Heart right ventricle (tissue), 16 donors: ENCODE measurements at regions of chr17 and their contacts with region 1.

Region 1: DNA sequence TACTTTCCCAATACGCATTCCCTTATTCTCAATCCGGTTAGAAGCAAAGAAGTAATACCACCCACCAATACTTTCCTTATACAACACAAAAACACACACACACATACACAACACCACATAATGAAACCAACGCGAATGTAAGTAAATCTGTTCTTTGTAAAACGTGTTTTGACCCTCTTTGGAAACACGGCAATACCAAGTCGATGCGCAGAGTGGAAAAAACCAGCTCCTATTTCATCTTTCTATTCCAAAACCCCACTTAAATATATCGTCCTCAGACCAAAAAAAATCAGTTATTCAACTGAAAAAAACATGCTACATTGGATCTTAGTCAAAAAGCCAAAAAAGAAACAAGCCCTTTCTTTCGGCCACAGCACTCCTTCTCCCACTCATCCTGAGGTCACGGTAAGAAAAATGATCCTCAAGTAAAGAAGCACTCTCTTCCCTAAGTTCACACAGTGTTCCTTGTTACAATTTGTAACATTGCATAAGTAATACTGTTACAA is 31.0 kb upstream of the ARL4D start:
- DNase-seq: no peak
- ATAC-seq: peak in 7 of 8 donors; percentile 4 to 40 (median 25)
- H3K4me3 ChIP-seq: peak overlapping the region in 9 of 10 donors; percentile 45 to 66 (median 58)
- H3K27ac ChIP-seq: peak overlapping the region; percentile 97 to 100 (median 100)
- H3K4me1 ChIP-seq: peaks cover 8 to 47% (median 36%) of the 10 kb centered on the region in 9 donors
- H3K27me3 ChIP-seq: no peaks in the 10 kb centered on the region
- CTCF ChIP-seq: no peak

Region 2: GRCh38 chr17:43388359-43389045 is 20.7 kb after region 1 on chr17:
- intact Hi-C with region 1: loop called in 8 of 10 experiments (anchors 1 to 2 kb)
- DNase-seq: peak; percentile 88 to 92
- ATAC-seq: peak; percentile 90 to 95 (median 92)
- H3K4me3 ChIP-seq: peak overlapping the region; percentile 53 to 75 (median 66)
- H3K27ac ChIP-seq: peak overlapping the region; percentile 93 to 99 (median 98)
- H3K4me1 ChIP-seq: peaks cover 0 to 21% (median 11%) of the 10 kb centered on the region in 9 donors
- H3K27me3 ChIP-seq: no peaks in the 10 kb centered on the region
- CTCF ChIP-seq: no peak

Region 3: DNA sequence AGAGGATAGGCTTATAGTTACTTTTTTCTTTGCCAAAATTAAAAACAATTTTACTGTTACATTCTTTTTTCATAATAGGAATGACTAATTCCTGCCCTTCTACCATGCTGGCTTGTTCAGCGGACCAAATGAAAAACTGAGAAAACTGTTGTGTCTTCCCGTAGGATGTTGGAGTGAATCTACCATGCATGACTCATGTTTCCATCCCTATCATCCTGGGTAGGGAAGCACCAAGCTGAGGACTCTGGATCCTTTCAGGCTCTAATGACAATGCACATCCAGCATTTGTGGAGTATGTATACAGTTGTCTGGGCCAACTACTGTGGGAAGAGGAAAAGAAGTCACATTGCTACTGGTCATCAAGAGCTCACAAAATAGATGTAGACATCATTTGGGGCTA is 74.9 kb after region 1 on chr17:
- intact Hi-C with region 1: no loop called
- DNase-seq: no peak
- ATAC-seq: peak in 1 of 8 donors; percentile 72
- H3K4me3 ChIP-seq: no peak overlapping the region
- H3K27ac ChIP-seq: no peak overlapping the region
- H3K4me1 ChIP-seq: no peaks in the 10 kb centered on the region
- H3K27me3 ChIP-seq: peaks cover 0 to 4% (median 0%) of the 10 kb centered on the region in 7 donors
- CTCF ChIP-seq: no peak